Naive thymus-derived CD4-positive, alpha-beta T cell (primary cell): ENCODE measurements at regions of chr15 and their contacts with region 1.

Region 1: DNA sequence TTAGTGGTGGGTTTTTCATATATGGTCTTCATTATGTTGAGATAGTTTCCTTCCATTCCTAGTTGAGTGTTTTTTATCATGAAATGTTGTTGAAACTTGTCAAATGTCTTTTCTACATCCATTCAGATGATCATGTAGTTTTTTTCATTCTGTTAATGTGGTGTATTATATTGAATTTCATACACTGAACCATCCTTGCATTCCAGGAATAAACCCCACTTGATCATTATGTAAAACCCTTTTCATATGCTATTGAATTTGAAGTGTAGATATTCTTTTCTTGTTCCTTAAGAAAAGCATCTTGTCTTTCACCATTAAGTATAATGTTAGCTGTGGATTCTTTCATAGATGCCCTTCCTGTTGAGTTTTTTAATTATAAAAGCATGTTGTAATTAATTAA is 42.9 kb downstream of the PIAS1 start:
- DNase-seq: no peak
- ATAC-seq: no peak
- H3K4me3 ChIP-seq: no peak overlapping the region
- H3K4me3 Mint-ChIP-seq: peak overlapping the region in 3 of 10 donors; percentile 8 to 24 (median 9)
- H3K27ac ChIP-seq: no peak overlapping the region
- H3K27ac Mint-ChIP-seq: no peak overlapping the region
- H3K4me1 ChIP-seq: peaks cover 0 to 4% of the 10 kb centered on the region in 2 donors
- H3K4me1 Mint-ChIP-seq: peaks cover 30 to 70% (median 54%) of the 10 kb centered on the region in 7 donors
- H3K27me3 ChIP-seq: no peaks in the 10 kb centered on the region
- H3K27me3 Mint-ChIP-seq: no peaks in the 10 kb centered on the region

Region 2: GRCh38 chr15:68081869-68082505 is 15.0 kb before region 1 on chr15:
- CTCF ChIA-PET with region 1: no interaction called
- POLR2A ChIA-PET with region 1: no interaction called
- intact Hi-C with region 1: loop called in 1 of 2 experiments (anchors 2 kb)
- DNase-seq: no peak
- ATAC-seq: no peak
- H3K4me3 ChIP-seq: no peak overlapping the region
- H3K4me3 Mint-ChIP-seq: peak overlapping the region in 7 of 10 donors; percentile 15 to 48 (median 33)
- H3K27ac ChIP-seq: no peak overlapping the region
- H3K27ac Mint-ChIP-seq: peak overlapping the region in 7 of 9 donors; percentile 8 to 66 (median 46)
- H3K4me1 ChIP-seq: peaks cover 29 to 33% of the 10 kb centered on the region in 2 donors
- H3K4me1 Mint-ChIP-seq: peaks cover 19 to 94% (median 81%) of the 10 kb centered on the region in 7 donors
- H3K27me3 ChIP-seq: no peaks in the 10 kb centered on the region
- H3K27me3 Mint-ChIP-seq: no peaks in the 10 kb centered on the region